HEK293 (cell line): ENCODE measurements at regions of chr5 and their contacts with region 1.

Region 1: DNA sequence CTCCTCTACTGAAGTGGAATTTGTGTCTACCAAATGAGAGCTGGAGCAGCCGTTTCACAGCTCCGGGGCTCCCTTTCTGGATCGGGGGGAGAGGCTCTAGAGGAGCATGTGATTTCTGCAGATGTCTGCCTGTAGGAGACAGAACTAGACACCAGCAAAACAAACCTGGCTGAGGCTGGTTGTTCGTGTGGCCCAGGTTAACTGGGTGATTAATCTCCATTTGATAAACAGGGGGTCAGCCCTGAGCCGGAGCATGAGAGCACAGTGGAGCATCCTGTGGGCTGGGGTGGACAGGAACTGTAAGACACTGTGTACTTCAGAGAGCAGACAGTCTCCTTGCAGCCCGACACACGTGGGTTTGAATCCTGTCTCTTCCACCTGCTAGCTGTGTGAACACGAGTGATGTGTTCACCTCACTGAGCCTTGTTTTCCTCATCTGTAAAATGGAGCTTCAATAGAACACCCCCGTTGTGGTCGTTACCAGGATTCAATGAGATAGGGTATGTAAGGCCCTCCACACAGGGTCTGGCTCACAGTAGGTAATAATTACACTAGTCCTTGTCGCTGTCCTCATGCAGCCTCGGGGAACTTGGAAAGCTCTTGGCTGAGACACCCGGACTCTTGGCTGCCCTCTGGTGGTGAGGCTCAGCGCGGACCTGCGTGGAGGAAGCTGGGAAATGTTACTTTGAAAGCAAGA is 12.9 kb downstream of the CXCL14 start:
- H3K4me3 ChIP-seq: no peak overlapping the region
- H3K27ac ChIP-seq: no peak overlapping the region
- H3K4me1 ChIP-seq: no peaks in the 10 kb centered on the region
- CTCF ChIP-seq: peak; percentile 58; the same call in 1 of the 2 replicates

Region 2: DNA sequence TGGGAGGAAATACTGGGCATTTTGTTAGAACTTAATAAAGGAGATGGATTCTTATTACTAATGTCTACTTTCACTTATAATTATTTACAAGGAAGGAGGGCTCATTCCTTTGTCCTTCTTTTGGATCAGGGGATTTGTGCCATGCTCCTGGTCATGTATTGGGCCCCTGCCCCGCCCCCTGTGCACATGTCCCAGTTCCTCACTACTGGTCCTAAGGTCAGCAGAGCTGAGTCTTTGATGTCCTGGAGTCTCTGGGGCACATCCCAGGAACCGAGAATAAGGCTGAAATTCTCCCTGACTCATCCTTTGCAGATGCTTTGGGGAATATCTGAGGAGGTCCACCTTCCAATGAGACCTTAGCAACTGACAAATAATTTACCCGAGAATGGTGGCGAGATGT is 94.1 kb before region 1 on chr5:
- CTCF ChIA-PET with region 1: interaction called, 575 read pairs
- POLR2A ChIA-PET with region 1: no interaction called
- H3K4me3 ChIP-seq: no peak overlapping the region
- H3K27ac ChIP-seq: no peak overlapping the region
- H3K4me1 ChIP-seq: peaks cover 1% of the 10 kb centered on the region; the same call in 1 of the 2 replicates
- CTCF ChIP-seq: no peak

Region 3: DNA sequence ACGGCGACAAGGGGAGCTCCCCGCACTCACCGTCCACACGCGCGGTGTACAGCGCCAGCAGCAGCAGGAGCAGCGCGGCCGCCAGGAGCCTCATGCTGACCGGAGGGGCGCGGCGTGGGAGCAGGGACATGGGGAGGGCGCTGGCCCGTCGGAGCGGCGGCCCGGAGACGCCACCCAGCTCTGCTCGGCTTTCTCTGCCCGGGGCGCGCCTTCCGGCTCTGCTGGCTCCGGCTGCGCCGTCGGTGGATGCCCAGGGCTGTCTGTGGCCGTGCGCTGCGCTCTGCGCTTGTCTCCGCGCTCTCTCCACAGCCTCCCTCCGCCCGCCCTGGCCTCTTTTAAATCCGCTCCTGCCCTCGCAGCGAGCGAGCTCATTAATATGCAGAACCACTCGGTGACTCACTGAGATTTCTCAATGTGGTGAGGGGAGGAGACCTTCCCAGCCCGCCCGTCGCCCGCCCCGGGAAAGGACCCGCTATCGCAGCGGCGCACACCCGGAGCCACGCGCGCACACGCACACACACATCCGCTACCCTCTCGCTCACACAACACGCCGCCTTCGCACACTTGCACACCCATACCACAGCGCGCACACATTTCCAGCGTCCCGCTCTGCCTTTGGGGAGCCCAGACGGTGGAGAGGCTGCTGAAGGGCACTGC is 12.9 kb after region 1 on chr5 and contains the start of gene CXCL14:
- CTCF ChIA-PET with region 1: interaction called, 46 read pairs
- POLR2A ChIA-PET with region 1: no interaction called
- H3K4me3 ChIP-seq: peak within 1 kb of the TSS; percentile 11; the same call in 1 of the 2 replicates
- H3K27ac ChIP-seq: no peak within 1 kb of the TSS
- H3K4me1 ChIP-seq: no peaks in the 10 kb centered on the region; the same call in 1 of the 2 replicates
- CTCF ChIP-seq: no peak

Region 4: GRCh38 chr5:135591277-135591676 is 25.4 kb after region 1 on chr5:
- CTCF ChIA-PET with region 1: interaction called, 33 read pairs
- POLR2A ChIA-PET with region 1: no interaction called
- H3K4me3 ChIP-seq: no peak overlapping the region
- H3K27ac ChIP-seq: no peak overlapping the region
- H3K4me1 ChIP-seq: no peaks in the 10 kb centered on the region
- CTCF ChIP-seq: no peak

Region 5: DNA sequence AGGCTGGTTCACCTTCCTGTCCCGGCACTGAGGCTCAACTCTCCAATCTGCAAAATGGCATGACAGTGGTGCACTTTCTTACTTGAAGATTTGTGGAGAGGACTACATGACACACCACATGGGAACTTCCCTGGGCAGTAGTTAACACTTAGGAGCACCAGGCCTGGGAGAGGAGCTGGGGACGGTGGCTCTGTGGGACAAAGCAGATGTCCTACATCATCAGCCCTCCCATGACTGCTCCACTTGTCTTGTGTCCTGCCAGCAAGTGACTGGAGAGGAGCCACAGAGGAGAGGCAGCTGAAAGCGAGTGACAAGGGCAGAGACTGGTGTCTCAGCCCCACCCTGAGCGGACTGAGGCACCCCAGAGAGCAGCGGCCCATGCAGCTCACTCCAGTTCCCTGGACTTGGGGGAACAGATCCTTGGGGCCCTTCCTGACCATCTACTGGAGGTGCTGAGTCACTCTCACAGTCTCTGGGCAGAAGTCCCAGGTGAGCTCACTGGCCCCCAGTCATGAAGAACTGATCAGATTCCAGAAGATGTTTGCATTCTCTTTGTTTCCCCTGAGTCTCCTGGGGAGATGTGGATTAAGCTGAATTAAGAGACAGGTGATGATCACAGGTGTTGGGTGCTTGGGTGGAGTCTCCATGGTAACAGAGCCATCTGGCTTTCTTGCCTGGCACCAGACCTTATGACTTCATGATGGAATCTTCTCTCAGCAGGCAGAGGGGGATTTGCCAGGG is 255.4 kb after region 1 on chr5:
- CTCF ChIA-PET with region 1: interaction called, 319 read pairs
- POLR2A ChIA-PET with region 1: no interaction called
- H3K4me3 ChIP-seq: no peak overlapping the region
- H3K27ac ChIP-seq: no peak overlapping the region
- H3K4me1 ChIP-seq: no peaks in the 10 kb centered on the region
- CTCF ChIP-seq: no peak